H1 (cell line): ENCODE measurements at regions of chr1 and their contacts with region 1.

Region 1: GRCh38 chr1:37267111-37267813 is 207.1 kb upstream of the ZC3H12A start:
- DNase-seq: no peak
- H3K4me3 ChIP-seq: no peak overlapping the region
- H3K27ac ChIP-seq: no peak overlapping the region
- H3K4me1 ChIP-seq: peaks cover 0 to 10% (median 5%) of the 10 kb centered on the region in 4 experiments; a peak in 4 of 7 replicates
- H3K27me3 ChIP-seq: no peaks in the 10 kb centered on the region; a peak in 1 of 7 replicates
- CTCF ChIP-seq: no peak
- EP300 ChIP-seq: no peak
- POLR2A ChIP-seq: no peak
- RAD21 ChIP-seq: no peak

Region 2: GRCh38 chr1:37315371-37315846 is 48.1 kb after region 1 on chr1:
- CTCF ChIA-PET with region 1: interaction called, 10 read pairs
- POLR2A ChIA-PET with region 1: interaction called, 3 read pairs
- DNase-seq: no peak
- H3K4me3 ChIP-seq: peak overlapping the region in 2 of 4 experiments; percentile 30 to 43; a peak in 4 of 8 replicates
- H3K27ac ChIP-seq: peak overlapping the region; percentile 28; the same call in 1 of the 2 replicates
- H3K4me1 ChIP-seq: peaks cover 12 to 34% (median 25%) of the 10 kb centered on the region in 4 experiments
- H3K27me3 ChIP-seq: peaks cover 0 to 7% (median 4%) of the 10 kb centered on the region in 4 experiments; a peak in 4 of 7 replicates
- CTCF ChIP-seq: no peak
- EP300 ChIP-seq: 0 out of 3 replicates have a peak, but pooled peaks of 1 of the 2 experiments have one; percentile 52
- POLR2A ChIP-seq: no peak
- RAD21 ChIP-seq: no peak

Region 3: DNA sequence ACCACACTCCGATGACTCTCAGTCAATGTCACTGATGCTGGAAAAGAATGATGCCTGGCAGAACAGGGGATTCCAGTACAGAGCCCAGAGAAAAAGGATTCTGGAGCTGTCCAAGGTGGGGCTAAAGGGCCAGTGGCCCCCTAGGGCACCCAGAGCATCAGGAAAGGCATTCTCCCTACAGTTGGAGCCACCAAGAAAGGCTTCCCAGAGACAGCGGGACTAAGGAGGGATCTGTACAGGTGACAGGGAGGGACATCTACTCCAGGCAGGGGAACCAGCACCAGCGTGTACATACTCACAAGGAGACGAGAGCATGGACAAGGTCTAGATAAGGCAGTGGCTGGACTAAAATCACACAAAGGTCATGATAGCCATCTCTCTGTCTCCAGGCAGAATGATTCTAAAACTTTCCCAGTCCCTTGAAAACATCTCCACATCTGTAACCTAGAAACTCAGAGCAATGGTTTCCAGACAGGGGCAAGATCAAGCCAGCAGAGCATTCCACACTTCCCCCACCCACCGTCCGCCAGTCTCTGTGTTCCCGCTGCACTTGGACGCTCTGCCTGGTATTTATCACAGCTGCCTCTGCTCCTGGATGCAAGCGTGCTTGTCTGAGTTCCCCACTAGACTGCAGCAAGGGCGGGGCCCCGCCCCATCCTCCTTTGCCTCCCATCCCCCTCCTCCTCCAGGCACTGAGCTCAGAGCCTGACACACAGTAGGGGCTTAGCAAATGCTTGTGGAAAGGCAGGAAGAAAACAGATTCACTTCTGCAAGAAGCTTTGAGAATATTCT is 95.5 kb after region 1 on chr1:
- CTCF ChIA-PET with region 1: no interaction called
- POLR2A ChIA-PET with region 1: no interaction called
- DNase-seq: peak; percentile 25 to 65
- H3K4me3 ChIP-seq: peak overlapping the region in 2 of 4 experiments; percentile 3 to 24; a peak in 2 of 8 replicates
- H3K27ac ChIP-seq: no peak overlapping the region
- H3K4me1 ChIP-seq: peaks cover 5 to 9% (median 8%) of the 10 kb centered on the region in 4 experiments; a peak in 5 of 7 replicates
- H3K27me3 ChIP-seq: no peaks in the 10 kb centered on the region; a peak in 1 of 7 replicates
- CTCF ChIP-seq: no peak
- EP300 ChIP-seq: no peak
- POLR2A ChIP-seq: no peak
- RAD21 ChIP-seq: peak in 1 of 2 experiments; percentile 1; a peak in 1 of 4 replicates

Region 4: DNA sequence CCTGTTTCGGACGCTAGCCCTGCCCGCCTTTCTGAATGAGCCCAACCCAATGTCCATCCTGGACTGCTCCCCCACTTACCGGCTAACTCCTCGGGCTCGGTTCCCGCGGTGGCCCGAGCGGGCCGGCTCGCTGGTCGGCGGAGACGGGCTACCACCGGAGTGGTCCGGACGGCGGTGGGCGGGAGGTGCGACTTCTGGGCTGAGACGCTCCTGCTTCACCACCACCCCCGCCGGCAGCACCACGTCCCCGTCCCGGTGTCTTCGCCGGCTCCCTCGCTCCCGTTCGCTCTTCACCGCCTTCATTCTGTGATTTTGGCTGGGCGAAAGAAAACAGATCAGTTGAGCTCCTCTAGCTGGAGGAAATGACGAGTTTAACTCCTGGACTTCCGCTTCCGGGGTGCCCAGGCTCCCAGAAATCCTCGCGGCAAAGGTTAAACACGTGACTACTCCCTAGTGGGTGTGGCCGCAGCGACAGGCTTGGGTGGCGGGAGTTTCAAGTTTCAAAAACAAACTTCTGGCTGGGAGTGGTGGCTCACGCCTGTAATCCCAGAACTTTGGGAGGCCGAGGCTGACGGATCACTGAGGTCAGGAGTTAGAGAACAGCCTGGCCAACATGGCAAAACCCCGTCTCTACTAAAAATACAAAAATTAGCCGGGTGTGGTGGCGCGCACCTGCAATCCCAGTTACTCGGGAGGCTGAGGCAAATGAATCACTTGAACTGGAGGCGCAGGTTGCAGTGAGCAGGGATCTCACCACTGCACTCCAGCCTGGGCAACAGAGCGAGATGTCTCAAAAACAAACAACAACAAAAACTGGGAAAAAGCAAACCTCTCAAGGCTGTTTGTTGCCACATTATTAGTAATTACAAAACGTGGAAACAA is 286.9 kb after region 1 on chr1 and contains the start of gene SNIP1:
- CTCF ChIA-PET with region 1: no interaction called
- POLR2A ChIA-PET with region 1: no interaction called
- DNase-seq: peak; percentile 46 to 92
- H3K4me3 ChIP-seq: peak within 1 kb of the TSS; percentile 67 to 92 (median 82)
- H3K27ac ChIP-seq: peak within 1 kb of the TSS; percentile 80; the same call in 1 of the 2 replicates
- H3K4me1 ChIP-seq: peaks cover 3 to 13% (median 5%) of the 10 kb centered on the region in 4 experiments
- H3K27me3 ChIP-seq: no peaks in the 10 kb centered on the region
- CTCF ChIP-seq: no peak
- EP300 ChIP-seq: 0 out of 3 replicates have a peak, but pooled peaks of 1 of the 2 experiments have one; percentile 27
- POLR2A ChIP-seq: peak; percentile 37 to 82
- RAD21 ChIP-seq: no peak
- total RNA-seq, gene SNIP1: 14.8 and 15.7 TPM in 2 replicates